Caco-2 (cell line): ENCODE measurements at regions of chr19 and their contacts with region 1.

Region 1: GRCh38 chr19:46890423-46891170 is 29.8 kb downstream of the ARHGAP35 start:
- DNase-seq: peak; percentile 86 to 90
- H3K4me3 ChIP-seq: no peak overlapping the region
- H3K4me3 Mint-ChIP-seq: peak overlapping the region; percentile 63
- H3K27ac Mint-ChIP-seq: peak overlapping the region; percentile 90
- H3K4me1 ChIP-seq: peaks cover 42% of the 10 kb centered on the region
- H3K4me1 Mint-ChIP-seq: peaks cover 52% of the 10 kb centered on the region
- H3K27me3 ChIP-seq: no peaks in the 10 kb centered on the region
- H3K27me3 Mint-ChIP-seq: no peaks in the 10 kb centered on the region
- CTCF ChIP-seq: peak in 1 of 2 experiments; percentile 29

Region 2: GRCh38 chr19:46866387-46867152 is 24.0 kb before region 1 on chr19:
- CTCF ChIA-PET with region 1: interaction called, 4 read pairs
- POLR2A ChIA-PET with region 1: interaction called, 8 read pairs
- intact Hi-C with region 1: loop called (anchors 1 kb)
- DNase-seq: peak in 1 of 2 experiments; percentile 33
- H3K4me3 ChIP-seq: no peak overlapping the region
- H3K4me3 Mint-ChIP-seq: peak overlapping the region; percentile 12
- H3K27ac Mint-ChIP-seq: peak overlapping the region; percentile 73
- H3K4me1 ChIP-seq: peaks cover 59% of the 10 kb centered on the region
- H3K4me1 Mint-ChIP-seq: peaks cover 20% of the 10 kb centered on the region
- H3K27me3 ChIP-seq: no peaks in the 10 kb centered on the region
- H3K27me3 Mint-ChIP-seq: no peaks in the 10 kb centered on the region
- CTCF ChIP-seq: no peak

Region 3: DNA sequence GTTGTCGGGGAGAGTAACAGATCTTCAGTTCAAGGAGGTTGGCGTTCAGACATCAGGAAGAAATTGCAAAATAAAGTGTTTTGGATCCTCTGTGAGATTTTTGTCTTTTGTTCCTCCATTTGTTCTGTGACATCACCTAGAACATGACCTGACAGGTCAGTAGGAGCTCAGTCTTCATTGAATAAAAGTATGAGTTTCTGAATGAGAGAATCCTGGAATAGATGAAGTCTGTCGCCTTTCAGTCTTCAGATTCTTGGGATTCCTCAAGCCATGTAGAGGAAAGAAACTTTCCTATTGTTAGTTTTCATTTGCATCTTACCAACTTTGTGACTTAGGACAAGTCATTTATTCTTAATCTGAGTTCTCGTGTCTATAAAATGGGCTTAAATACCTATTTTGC is 15.4 kb before region 1 on chr19:
- CTCF ChIA-PET with region 1: no interaction called
- POLR2A ChIA-PET with region 1: no interaction called
- intact Hi-C with region 1: loop called (anchors 1 kb)
- DNase-seq: no peak
- H3K4me3 ChIP-seq: no peak overlapping the region
- H3K4me3 Mint-ChIP-seq: peak overlapping the region; percentile 45
- H3K27ac Mint-ChIP-seq: peak overlapping the region; percentile 81
- H3K4me1 ChIP-seq: peaks cover 32% of the 10 kb centered on the region
- H3K4me1 Mint-ChIP-seq: peaks cover 14% of the 10 kb centered on the region
- H3K27me3 ChIP-seq: no peaks in the 10 kb centered on the region
- H3K27me3 Mint-ChIP-seq: no peaks in the 10 kb centered on the region
- CTCF ChIP-seq: no peak

Region 4: DNA sequence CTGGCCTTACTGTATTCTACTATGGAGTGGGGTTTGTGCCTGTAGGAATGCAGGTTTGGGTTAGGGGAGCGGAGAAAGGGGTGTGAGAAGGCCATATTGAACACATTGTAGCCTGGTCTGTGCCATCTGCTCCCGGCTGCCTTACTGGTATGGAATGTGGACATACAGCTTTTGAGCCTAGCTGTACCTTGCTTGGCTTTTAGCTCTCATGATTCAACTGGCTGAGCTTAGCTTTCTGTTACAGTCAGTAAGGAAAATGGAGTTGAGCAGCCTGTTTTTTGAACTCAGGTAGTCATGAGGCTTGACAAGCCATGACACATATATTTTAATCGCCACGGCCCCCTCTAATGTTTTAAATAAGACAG is 11.8 kb after region 1 on chr19:
- CTCF ChIA-PET with region 1: interaction called, 10 read pairs
- POLR2A ChIA-PET with region 1: interaction called, 5 read pairs
- intact Hi-C with region 1: no loop called
- DNase-seq: peak; percentile 61 to 67
- H3K4me3 ChIP-seq: no peak overlapping the region
- H3K4me3 Mint-ChIP-seq: peak overlapping the region; percentile 1
- H3K27ac Mint-ChIP-seq: peak overlapping the region; percentile 56
- H3K4me1 ChIP-seq: peaks cover 48% of the 10 kb centered on the region
- H3K4me1 Mint-ChIP-seq: peaks cover 51% of the 10 kb centered on the region
- H3K27me3 ChIP-seq: no peaks in the 10 kb centered on the region
- H3K27me3 Mint-ChIP-seq: no peaks in the 10 kb centered on the region
- CTCF ChIP-seq: no peak

Region 5: DNA sequence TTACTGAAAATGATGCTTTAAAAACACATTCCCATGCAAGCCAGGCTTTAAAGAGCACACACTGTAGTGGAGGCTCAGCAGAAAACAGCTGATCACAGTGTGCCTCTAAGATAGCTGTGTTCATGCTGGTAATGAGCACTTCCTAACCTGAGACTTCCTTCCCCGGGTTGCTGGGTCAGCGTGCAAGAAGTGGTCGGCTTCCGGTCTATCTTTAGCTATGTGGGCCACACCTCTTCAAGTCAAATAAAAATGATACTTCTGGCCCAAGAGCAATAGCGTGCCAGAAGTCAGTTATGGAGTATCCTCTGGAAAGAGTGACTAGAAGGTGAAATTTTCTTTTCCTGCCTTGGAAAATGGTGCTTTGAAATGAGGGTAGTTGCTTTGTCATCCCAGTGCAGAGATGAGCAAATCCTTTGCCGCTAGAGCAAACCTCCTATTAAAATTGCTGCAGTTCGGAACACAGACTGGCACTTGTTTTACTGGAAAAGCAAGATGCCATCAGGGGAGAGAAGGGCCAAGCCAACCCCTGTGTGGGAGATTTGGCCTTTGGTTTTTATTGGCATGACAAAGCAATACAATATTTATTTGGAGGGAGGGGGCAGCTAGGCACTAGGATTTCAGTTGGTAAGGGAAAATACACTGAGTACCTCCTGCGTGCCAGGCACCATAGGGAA is 34.4 kb after region 1 on chr19:
- CTCF ChIA-PET with region 1: interaction called, 4 read pairs
- POLR2A ChIA-PET with region 1: interaction called, 11 read pairs
- intact Hi-C with region 1: loop called (anchors 1 kb)
- DNase-seq: peak; percentile 20 to 36
- H3K4me3 ChIP-seq: no peak overlapping the region
- H3K4me3 Mint-ChIP-seq: peak overlapping the region; percentile 50
- H3K27ac Mint-ChIP-seq: peak overlapping the region; percentile 80
- H3K4me1 ChIP-seq: peaks cover 34% of the 10 kb centered on the region
- H3K4me1 Mint-ChIP-seq: peaks cover 32% of the 10 kb centered on the region
- H3K27me3 ChIP-seq: no peaks in the 10 kb centered on the region
- H3K27me3 Mint-ChIP-seq: no peaks in the 10 kb centered on the region
- CTCF ChIP-seq: no peak